HEK293 (cell line): ENCODE measurements at regions of chr19 and their contacts with region 1.

Region 1: GRCh38 chr19:58408152-58409009 is at the start of gene ZNF584:
- H3K4me3 ChIP-seq: peak within 1 kb of the TSS; percentile 98
- H3K27ac ChIP-seq: peak within 1 kb of the TSS; percentile 76
- H3K4me1 ChIP-seq: peaks cover 4% of the 10 kb centered on the region; the same call in 1 of the 2 replicates
- CTCF ChIP-seq: peak; percentile 76

Region 2: GRCh38 chr19:58182989-58183816 is 225.2 kb before region 1 on chr19 and contains the start of gene ZNF274:
- CTCF ChIA-PET with region 1: no interaction called
- POLR2A ChIA-PET with region 1: interaction called, 10 read pairs
- H3K4me3 ChIP-seq: peak within 1 kb of the TSS; percentile 95
- H3K27ac ChIP-seq: peak within 1 kb of the TSS; percentile 85
- H3K4me1 ChIP-seq: no peaks in the 10 kb centered on the region
- CTCF ChIP-seq: 0 out of 2 replicates have a peak, but pooled peaks have one; percentile 24

Region 3: DNA sequence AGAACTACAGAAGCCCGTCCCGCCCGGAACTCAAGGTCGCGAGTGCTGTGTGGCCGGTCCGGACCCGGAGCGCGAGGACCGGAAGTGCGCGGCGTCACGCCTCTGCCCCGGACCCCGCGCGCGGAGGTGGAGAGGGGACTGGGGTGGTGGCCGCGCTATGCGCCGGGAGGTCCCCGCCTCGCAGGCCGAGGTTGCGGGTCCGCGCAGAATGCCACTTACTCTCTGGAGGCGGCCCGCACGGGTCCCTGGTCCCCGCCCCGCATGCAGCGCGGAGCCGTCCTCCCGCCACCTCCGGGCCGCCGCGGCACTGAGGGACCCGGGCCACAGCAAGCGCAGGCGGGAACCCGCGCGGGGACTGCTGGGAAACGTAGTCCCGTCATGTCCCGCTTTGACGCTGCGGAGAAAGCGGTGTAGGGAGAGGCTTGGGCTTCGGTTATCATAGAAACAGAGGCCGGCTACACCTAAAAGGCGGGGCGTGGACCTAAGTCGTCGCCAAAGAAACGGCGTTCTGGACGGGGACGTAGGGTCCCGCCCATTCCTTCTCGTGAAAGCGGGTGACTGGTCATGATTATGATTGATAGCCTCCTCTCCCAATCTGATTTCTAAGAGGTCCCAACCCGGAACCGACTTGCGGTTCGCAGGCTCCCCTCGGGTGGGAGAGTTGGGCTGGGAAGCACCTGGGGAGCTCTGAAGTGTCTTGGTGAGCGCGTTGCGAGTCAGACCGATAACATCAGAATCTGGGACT is 27.5 kb before region 1 on chr19 and contains the start of gene ZNF837:
- CTCF ChIA-PET with region 1: interaction called, 4 read pairs
- POLR2A ChIA-PET with region 1: interaction called, 27 read pairs
- H3K4me3 ChIP-seq: peak within 1 kb of the TSS; percentile 83
- H3K27ac ChIP-seq: peak within 1 kb of the TSS; percentile 87
- H3K4me1 ChIP-seq: peaks cover 11% of the 10 kb centered on the region
- CTCF ChIP-seq: no peak

Region 4: GRCh38 chr19:58429745-58430144 is 21.4 kb after region 1 on chr19:
- CTCF ChIA-PET with region 1: interaction called, 5 read pairs
- POLR2A ChIA-PET with region 1: interaction called, 10 read pairs
- H3K4me3 ChIP-seq: no peak overlapping the region
- H3K27ac ChIP-seq: no peak overlapping the region
- H3K4me1 ChIP-seq: no peaks in the 10 kb centered on the region
- CTCF ChIP-seq: no peak

Region 5: GRCh38 chr19:58460039-58460438 is 51.7 kb after region 1 on chr19:
- CTCF ChIA-PET with region 1: no interaction called
- POLR2A ChIA-PET with region 1: interaction called, 12 read pairs
- H3K4me3 ChIP-seq: no peak overlapping the region
- H3K27ac ChIP-seq: no peak overlapping the region
- H3K4me1 ChIP-seq: no peaks in the 10 kb centered on the region
- CTCF ChIP-seq: no peak

Region 6: GRCh38 chr19:58475714-58476497 is 67.5 kb after region 1 on chr19 and contains the start of gene ZNF446:
- CTCF ChIA-PET with region 1: interaction called, 8 read pairs
- POLR2A ChIA-PET with region 1: interaction called, 11 read pairs
- H3K4me3 ChIP-seq: peak within 1 kb of the TSS; percentile 75
- H3K27ac ChIP-seq: peak within 1 kb of the TSS; percentile 69
- H3K4me1 ChIP-seq: peaks cover 7% of the 10 kb centered on the region; the same call in 1 of the 2 replicates
- CTCF ChIP-seq: peak; percentile 80